ENCODE measurements at regions of chr3 and their contacts with region 1.

Region 1: GRCh38 chr3:98593046-98593936 is at the start of gene CPOX:
- DNase-seq: peak; percentile 93
- H3K4me3 Mint-ChIP-seq: peak within 1 kb of the TSS; percentile 98
- H3K27ac Mint-ChIP-seq: peak within 1 kb of the TSS; percentile 95
- H3K4me1 Mint-ChIP-seq: peaks cover 36% of the 10 kb centered on the region
- H3K27me3 Mint-ChIP-seq: no peaks in the 10 kb centered on the region
- total RNA-seq, gene CPOX: 36.0 to 39.2 TPM

Region 2: DNA sequence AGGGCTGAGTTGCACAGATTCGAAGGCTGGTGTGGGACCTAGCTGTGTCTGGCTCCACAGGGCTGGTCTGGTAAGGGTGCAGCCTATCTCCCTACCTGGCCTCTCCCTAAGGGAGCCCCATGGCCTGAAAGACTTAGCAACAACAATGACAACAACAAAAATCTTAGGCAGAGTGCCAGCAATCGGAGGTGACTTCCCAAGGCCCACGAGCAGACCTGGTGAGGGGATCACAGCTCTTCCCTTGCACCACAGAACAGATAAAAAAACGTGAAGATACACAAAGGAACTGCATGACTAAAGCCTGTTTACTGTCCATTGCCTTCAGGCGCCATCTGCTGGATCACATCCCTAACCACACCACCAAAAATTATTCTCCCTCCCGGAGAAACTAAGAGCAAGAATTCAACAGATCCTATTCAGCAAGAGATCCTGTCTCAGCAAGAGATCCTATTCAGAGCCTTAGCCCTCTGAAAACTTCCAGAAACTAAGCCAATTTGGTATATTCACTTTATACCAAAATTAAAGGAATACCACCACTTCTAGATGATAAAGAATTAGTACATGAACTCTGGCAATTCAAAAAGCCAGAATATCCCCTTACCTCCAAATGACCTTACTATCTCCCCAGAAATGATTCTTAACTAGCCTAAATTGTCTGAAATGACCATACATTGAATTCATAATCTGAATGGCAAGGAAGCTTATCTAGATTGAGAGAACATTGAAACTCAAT is 263.7 kb before region 1 on chr3:
- CTCF ChIA-PET with region 1: interaction called, 4 read pairs
- POLR2A ChIA-PET with region 1: no interaction called
- intact Hi-C with region 1: loop called (anchors 2 kb)
- DNase-seq: peak; percentile 53
- H3K4me3 Mint-ChIP-seq: no peak overlapping the region
- H3K27ac Mint-ChIP-seq: no peak overlapping the region
- H3K4me1 Mint-ChIP-seq: peaks cover 9% of the 10 kb centered on the region
- H3K27me3 Mint-ChIP-seq: peaks cover 3% of the 10 kb centered on the region

Region 3: DNA sequence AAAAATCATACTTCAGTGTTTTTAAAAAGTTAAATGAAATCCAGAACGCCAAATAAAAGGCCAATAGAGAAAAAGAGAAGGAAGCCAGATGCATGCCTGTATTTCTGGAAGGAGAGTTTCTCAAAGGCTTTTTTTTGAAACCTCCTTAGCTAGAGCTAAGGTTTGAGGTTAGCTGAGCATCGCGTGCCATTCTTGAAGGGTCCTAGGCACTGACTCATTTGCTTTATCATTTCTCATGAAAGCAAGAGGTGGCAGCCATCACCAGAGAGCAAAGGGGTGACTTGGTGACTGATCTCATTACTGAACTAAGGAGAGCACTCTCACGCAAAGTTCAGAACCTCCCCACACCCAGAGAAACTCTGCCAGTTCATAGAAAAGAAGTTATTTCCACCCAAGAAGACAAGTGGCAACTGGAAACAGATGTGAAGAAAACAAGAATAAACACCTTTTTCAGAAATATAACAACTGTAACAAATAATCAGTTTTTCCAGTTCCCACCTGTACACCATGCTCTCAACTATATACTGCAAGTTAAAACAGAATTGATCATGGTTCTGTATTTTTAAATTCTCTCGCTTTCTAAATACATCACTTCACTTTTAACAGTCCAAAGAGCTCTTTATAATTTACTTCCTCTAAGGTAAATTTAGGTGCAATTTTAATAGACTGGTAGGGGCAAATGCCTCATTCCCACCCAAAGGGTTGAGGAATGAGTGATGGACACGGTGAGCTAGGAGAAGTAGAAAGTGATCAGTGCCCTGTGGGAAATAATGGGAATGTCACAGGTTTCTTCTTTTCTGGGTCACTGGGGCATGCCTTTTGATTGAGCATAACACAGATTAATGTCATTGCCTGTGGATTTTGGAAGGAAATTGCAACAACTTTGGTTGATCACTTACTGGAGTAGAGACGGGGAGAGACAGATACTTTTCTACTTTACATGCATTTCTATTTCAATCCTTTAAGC is 36.8 kb before region 1 on chr3:
- CTCF ChIA-PET with region 1: interaction called, 3 read pairs
- POLR2A ChIA-PET with region 1: interaction called, 3 read pairs
- intact Hi-C with region 1: loop called (anchors 1 kb)
- DNase-seq: peak; percentile 88
- H3K4me3 Mint-ChIP-seq: peak overlapping the region; percentile 74
- H3K27ac Mint-ChIP-seq: peak overlapping the region; percentile 98
- H3K4me1 Mint-ChIP-seq: peaks cover 80% of the 10 kb centered on the region
- H3K27me3 Mint-ChIP-seq: peaks cover 3% of the 10 kb centered on the region

Region 4: DNA sequence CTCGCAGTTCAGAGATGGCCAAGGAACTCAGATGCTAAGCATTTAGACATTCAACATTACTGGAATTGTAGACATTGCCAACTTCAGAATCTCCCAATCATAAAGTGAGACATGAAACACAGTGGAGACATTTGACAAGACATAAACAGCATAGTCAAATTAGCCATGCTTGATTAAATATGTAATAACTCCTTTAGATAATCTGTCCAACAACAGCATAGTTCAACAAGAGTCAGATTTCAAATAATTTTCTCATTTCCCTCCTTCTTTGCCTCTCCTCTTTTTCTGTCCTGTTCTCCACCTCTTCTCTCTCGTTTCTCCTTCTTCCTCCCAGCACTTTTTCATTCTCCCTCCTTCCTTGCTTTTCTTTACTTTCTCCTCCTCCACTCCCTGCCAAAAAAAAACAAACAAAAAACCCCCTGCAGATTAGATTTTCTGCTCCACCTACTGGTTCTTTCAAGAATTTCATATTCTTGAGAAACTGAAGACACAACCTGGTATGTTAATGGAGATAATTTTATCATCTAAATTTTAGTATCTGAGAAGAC is 20.0 kb before region 1 on chr3:
- CTCF ChIA-PET with region 1: interaction called, 9 read pairs
- POLR2A ChIA-PET with region 1: no interaction called
- intact Hi-C with region 1: loop called (anchors 1 kb)
- DNase-seq: no peak
- H3K4me3 Mint-ChIP-seq: no peak overlapping the region
- H3K27ac Mint-ChIP-seq: peak overlapping the region; percentile 66
- H3K4me1 Mint-ChIP-seq: peaks cover 54% of the 10 kb centered on the region
- H3K27me3 Mint-ChIP-seq: no peaks in the 10 kb centered on the region

Region 5: DNA sequence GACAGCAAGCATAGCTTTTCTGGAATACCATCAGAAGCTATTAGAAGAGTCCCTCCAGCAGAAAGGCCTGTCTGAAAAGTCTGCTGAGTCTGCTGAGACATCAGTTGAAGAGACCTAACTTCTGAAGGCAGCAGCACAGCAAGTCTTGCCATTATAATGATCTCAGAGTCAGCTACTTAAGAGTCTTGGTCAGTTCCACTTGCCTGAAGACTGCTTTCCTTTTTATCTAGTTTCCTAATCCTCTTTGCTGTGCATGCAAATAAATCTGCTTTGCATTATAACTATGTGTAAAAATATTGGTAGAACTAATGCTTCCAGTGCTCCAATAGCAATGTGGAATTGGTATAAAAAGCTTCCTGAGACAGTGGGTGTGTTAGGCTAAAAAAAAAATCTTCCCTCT is 35.0 kb after region 1 on chr3:
- CTCF ChIA-PET with region 1: no interaction called
- POLR2A ChIA-PET with region 1: no interaction called
- intact Hi-C with region 1: no loop called
- DNase-seq: no peak
- H3K4me3 Mint-ChIP-seq: no peak overlapping the region
- H3K27ac Mint-ChIP-seq: no peak overlapping the region
- H3K4me1 Mint-ChIP-seq: no peaks in the 10 kb centered on the region
- H3K27me3 Mint-ChIP-seq: no peaks in the 10 kb centered on the region

Region 6: GRCh38 chr3:98680723-98681122 is 87.4 kb after region 1 on chr3:
- CTCF ChIA-PET with region 1: no interaction called
- POLR2A ChIA-PET with region 1: no interaction called
- intact Hi-C with region 1: loop called (anchors 10 kb)
- DNase-seq: no peak
- H3K4me3 Mint-ChIP-seq: no peak overlapping the region
- H3K27ac Mint-ChIP-seq: no peak overlapping the region
- H3K4me1 Mint-ChIP-seq: no peaks in the 10 kb centered on the region
- H3K27me3 Mint-ChIP-seq: peaks cover 1% of the 10 kb centered on the region

Region 7: DNA sequence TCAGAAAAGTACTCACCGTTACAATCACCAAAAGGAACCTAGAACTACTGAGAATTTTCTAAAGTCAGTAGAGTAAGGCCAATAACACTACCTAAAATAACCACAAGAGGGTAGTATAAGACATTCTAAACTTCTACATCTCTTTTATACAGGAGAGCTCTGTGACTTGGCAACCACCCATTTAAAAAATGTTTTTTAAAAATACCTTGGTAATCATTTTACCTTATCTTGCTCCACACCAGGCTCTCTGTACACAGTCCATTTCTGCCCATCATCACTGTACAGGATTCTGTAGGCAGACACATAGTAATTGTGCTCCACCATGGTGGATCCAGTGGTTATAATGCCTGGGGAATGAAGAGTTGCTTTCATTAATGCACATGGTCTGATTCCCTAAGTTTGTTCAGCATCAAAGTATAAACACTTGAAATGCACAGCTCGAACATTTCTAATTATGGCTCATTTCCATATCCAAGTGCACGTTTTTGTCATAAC is 224.3 kb after region 1 on chr3:
- CTCF ChIA-PET with region 1: interaction called, 12 read pairs
- POLR2A ChIA-PET with region 1: no interaction called
- intact Hi-C with region 1: loop called (anchors 1 kb)
- DNase-seq: no peak
- H3K4me3 Mint-ChIP-seq: no peak overlapping the region
- H3K27ac Mint-ChIP-seq: no peak overlapping the region
- H3K4me1 Mint-ChIP-seq: no peaks in the 10 kb centered on the region
- H3K27me3 Mint-ChIP-seq: no peaks in the 10 kb centered on the region